GM13976 (cell line): ENCODE measurements at regions of chr16 and their contacts with region 1.

Region 1: GRCh38 chr16:47110939-47111338 is 32.8 kb downstream of the NETO2 start:
- DNase-seq: no peak
- CTCF ChIP-seq: no peak

Region 2: GRCh38 chr16:47058295-47059086 is 52.4 kb before region 1 on chr16:
- in situ Hi-C with region 1: loop called (anchors 10 kb)
- DNase-seq: no peak
- CTCF ChIP-seq: no peak